Transverse colon (tissue), 4 donors: ENCODE measurements at regions of chr2 and their contacts with region 1.

Region 1: DNA sequence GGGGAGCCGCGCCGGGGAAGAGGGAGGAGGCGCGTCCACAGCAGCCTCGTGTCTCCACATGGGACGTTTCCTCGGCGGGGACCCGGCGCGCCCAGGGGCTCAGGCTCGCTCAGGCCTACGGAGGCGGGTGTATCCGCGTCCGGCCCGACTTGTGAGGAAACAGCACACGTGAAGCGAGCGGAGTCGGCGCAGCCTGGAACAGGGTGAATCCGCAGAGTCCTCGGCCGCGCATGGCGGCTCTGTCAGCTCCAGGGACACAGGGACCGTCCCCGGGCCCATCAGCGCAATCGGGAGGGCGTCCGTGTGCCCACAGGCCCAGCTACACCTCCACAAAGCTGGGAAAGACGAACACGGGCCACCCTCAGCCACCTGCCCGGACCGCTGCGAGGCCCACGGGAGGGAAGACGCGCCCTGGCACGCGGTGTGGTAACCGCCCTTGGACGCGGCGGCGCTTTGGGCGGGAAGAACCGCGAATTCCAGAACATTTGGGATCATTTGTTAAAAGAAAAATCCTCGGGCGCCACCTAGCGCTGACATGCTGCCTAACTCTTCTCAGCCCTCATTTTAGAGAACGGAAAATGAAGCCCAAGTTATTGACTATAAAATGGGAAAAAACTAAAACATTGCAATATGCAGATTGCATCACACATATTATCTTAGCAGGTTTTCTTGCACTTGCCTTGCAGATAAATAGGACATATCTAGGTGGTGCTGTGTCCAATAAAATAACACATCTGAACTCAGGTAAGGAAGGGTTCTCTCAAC is 40.4 kb downstream of the TMEM18 start:
- DNase-seq: peak; percentile 62
- H3K4me3 ChIP-seq: peak overlapping the region in 2 of 4 donors; percentile 27 to 39
- H3K27ac ChIP-seq: no peak overlapping the region
- H3K4me1 ChIP-seq: peaks cover 0 to 6% (median 3%) of the 10 kb centered on the region in 4 donors
- H3K27me3 ChIP-seq: peaks cover 3% of the 10 kb centered on the region
- CTCF ChIP-seq: peak; percentile 77 to 85 (median 81)
- EP300 ChIP-seq: no peak
- POLR2A ChIP-seq: no peak

Region 2: DNA sequence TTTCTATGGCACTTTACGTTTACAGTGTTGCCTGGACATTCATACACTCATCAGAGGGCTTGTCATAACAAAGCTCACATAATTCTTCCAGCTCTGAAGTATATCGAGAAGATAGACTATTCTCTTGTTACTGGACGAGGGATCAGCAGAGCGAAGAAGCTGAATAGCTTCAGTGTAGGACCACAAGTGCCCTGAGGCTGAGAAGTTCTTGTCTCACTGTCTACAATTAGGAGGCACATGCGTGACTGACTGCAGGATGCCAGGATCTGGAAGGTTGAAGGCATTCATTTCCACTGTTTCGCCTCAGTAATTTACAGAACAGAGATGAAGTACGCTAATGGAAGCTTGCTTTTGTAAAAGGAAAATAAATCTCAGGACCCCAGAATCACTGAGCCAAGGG is 382.6 kb before region 1 on chr2:
- in situ Hi-C with region 1: loop called in 1 of 4 experiments (anchors 10 kb)
- intact Hi-C with region 1: loop called (anchors 5 kb)
- DNase-seq: no peak
- H3K4me3 ChIP-seq: no peak overlapping the region
- H3K27ac ChIP-seq: no peak overlapping the region
- H3K4me1 ChIP-seq: no peaks in the 10 kb centered on the region
- H3K27me3 ChIP-seq: no peaks in the 10 kb centered on the region
- CTCF ChIP-seq: no peak
- EP300 ChIP-seq: no peak
- POLR2A ChIP-seq: no peak

Region 3: GRCh38 chr2:824954-825353 is 188.1 kb after region 1 on chr2:
- in situ Hi-C with region 1: no loop called
- intact Hi-C with region 1: no loop called
- DNase-seq: no peak
- H3K4me3 ChIP-seq: no peak overlapping the region
- H3K27ac ChIP-seq: no peak overlapping the region
- H3K4me1 ChIP-seq: no peaks in the 10 kb centered on the region
- H3K27me3 ChIP-seq: no peaks in the 10 kb centered on the region
- CTCF ChIP-seq: no peak
- EP300 ChIP-seq: no peak
- POLR2A ChIP-seq: no peak